CD4-positive, alpha-beta memory T cell (primary cell): ENCODE measurements at regions of chr4 and their contacts with region 1.

Region 1: DNA sequence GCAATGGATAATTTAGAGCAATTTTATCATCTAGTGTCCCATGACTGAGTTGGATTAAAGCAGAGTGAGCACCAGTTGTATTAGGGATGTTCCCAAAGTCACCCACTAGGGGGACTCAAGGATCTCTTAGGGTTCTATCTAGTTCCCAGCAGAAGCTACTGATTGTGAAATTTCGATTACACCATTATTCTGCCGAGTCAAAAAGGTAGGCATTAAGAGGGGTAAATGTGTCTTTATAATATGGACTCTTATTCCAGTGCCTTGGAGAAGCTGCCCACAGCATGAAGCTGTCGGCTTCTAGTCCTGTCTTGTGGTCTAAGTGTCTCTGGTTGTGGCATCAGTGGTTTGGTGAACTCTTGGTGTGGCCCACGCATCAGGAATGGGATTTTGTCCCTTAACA is 53.3 kb downstream of the RGS12 start:
- DNase-seq: peak; percentile 46 to 58 (median 54)
- H3K4me3 ChIP-seq: no peak overlapping the region
- H3K4me3 Mint-ChIP-seq: no peak overlapping the region
- H3K27ac ChIP-seq: no peak overlapping the region
- H3K27ac Mint-ChIP-seq: peak overlapping the region in 3 of 7 donors; percentile 1 to 32 (median 5)
- H3K4me1 ChIP-seq: peaks cover 8% of the 10 kb centered on the region
- H3K4me1 Mint-ChIP-seq: peaks cover 8 to 19% (median 14%) of the 10 kb centered on the region in 4 donors
- H3K27me3 ChIP-seq: no peaks in the 10 kb centered on the region
- H3K27me3 Mint-ChIP-seq: no peaks in the 10 kb centered on the region

Region 2: GRCh38 chr4:3304801-3305597 is 41.1 kb before region 1 on chr4:
- CTCF ChIA-PET with region 1: no interaction called
- POLR2A ChIA-PET with region 1: no interaction called
- intact Hi-C with region 1: loop called (anchors 5 kb)
- DNase-seq: no peak
- H3K4me3 ChIP-seq: no peak overlapping the region
- H3K4me3 Mint-ChIP-seq: peak overlapping the region in 4 of 8 donors; percentile 49 to 62 (median 57)
- H3K27ac ChIP-seq: no peak overlapping the region
- H3K27ac Mint-ChIP-seq: peak overlapping the region in 5 of 7 donors; percentile 15 to 91 (median 75)
- H3K4me1 ChIP-seq: peaks cover 55% of the 10 kb centered on the region
- H3K4me1 Mint-ChIP-seq: peaks cover 36 to 56% (median 45%) of the 10 kb centered on the region in 4 donors
- H3K27me3 ChIP-seq: no peaks in the 10 kb centered on the region
- H3K27me3 Mint-ChIP-seq: peaks cover 0 to 2% of the 10 kb centered on the region in 2 donors

Region 3: GRCh38 chr4:3480528-3481112 is 134.5 kb after region 1 on chr4:
- CTCF ChIA-PET with region 1: interaction called, 20 read pairs
- POLR2A ChIA-PET with region 1: interaction called, 3 read pairs
- intact Hi-C with region 1: no loop called
- DNase-seq: peak in 4 of 5 donors; percentile 54 to 67 (median 62)
- H3K4me3 ChIP-seq: no peak overlapping the region
- H3K4me3 Mint-ChIP-seq: no peak overlapping the region
- H3K27ac ChIP-seq: no peak overlapping the region
- H3K27ac Mint-ChIP-seq: peak overlapping the region in 1 of 7 donors; percentile 12
- H3K4me1 ChIP-seq: peaks cover 7% of the 10 kb centered on the region
- H3K4me1 Mint-ChIP-seq: peaks cover 0 to 4% (median under 1%) of the 10 kb centered on the region in 4 donors
- H3K27me3 ChIP-seq: no peaks in the 10 kb centered on the region
- H3K27me3 Mint-ChIP-seq: peaks cover 13 to 14% of the 10 kb centered on the region in 2 donors